ENCODE measurements at regions of chr21 and their contacts with region 1.

Region 1: GRCh38 chr21:44510508-44511210 is 29.3 kb downstream of the KRTAP10-1 start:
- DNase-seq: peak; percentile 20 to 41
- ATAC-seq: peak; percentile 59 to 90; a peak in 5 of 6 replicates
- H3K4me3 ChIP-seq: no peak overlapping the region
- H3K27ac ChIP-seq: no peak overlapping the region
- H3K4me1 ChIP-seq: no peaks in the 10 kb centered on the region
- CTCF ChIP-seq: peak; percentile 56
- EP300 ChIP-seq: no peak
- POLR2A ChIP-seq: no peak
- RAD21 ChIP-seq: peak; percentile 69 to 72

Region 2: GRCh38 chr21:44742418-44743153 is 231.9 kb after region 1 on chr21:
- CTCF ChIA-PET with region 1: interaction called, 10 read pairs
- POLR2A ChIA-PET with region 1: no interaction called
- DNase-seq: peak in 1 of 2 experiments; percentile 33
- ATAC-seq: no peak
- H3K4me3 ChIP-seq: no peak overlapping the region
- H3K27ac ChIP-seq: no peak overlapping the region
- H3K4me1 ChIP-seq: no peaks in the 10 kb centered on the region
- CTCF ChIP-seq: peak; percentile 48
- EP300 ChIP-seq: no peak
- POLR2A ChIP-seq: no peak
- RAD21 ChIP-seq: peak; percentile 55 to 59; a peak in 4 of 5 replicates

Region 3: GRCh38 chr21:44792702-44793591 is 282.3 kb after region 1 on chr21:
- CTCF ChIA-PET with region 1: interaction called, 14 read pairs
- POLR2A ChIA-PET with region 1: no interaction called
- DNase-seq: peak; percentile 43 to 72
- ATAC-seq: peak; percentile 95 to 96
- H3K4me3 ChIP-seq: no peak overlapping the region
- H3K27ac ChIP-seq: no peak overlapping the region
- H3K4me1 ChIP-seq: no peaks in the 10 kb centered on the region
- CTCF ChIP-seq: peak; percentile 60
- EP300 ChIP-seq: no peak
- POLR2A ChIP-seq: no peak
- RAD21 ChIP-seq: peak; percentile 64 to 72